ENCODE measurements at regions of chr10 and their contacts with region 1.

Region 1: GRCh38 chr10:71899665-71900412 is 48.8 kb upstream of the PSAP start:
- DNase-seq: no peak
- ATAC-seq: no peak

Region 2: DNA sequence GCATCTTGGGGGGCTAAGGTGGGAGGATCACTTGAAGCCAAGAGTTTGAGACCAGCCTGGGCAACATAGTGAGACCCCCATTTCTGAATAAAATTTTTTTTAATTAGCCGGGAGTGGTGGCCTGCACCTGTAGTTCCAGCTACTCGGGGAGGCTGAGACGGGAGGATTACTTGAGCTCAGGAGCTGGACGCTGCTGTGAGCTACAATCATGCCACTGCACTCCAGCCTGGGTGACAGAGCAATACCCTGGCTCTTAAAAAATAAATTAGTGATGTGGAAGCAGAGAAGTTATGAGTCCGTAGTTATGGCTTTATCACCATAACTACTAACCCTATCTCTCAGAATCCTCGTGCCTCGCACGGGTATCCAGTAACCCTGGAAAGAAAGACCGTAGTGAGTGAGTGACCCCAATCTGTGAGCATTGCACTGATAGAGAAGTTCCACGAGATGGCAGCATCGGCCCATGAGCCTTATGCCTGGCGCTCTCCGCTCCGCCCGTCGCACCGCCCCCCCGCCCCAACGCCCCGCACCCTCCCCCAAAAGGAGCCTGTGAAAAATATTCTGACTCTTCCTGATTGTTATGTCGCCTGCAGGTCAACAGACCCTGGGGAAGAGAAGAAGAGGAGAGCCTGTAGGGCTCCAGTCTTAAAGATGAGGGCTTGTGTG is 585.7 kb before region 1 on chr10:
- intact Hi-C with region 1: loop called (anchors 5 kb)
- DNase-seq: no peak
- ATAC-seq: peak; percentile 68

Region 3: DNA sequence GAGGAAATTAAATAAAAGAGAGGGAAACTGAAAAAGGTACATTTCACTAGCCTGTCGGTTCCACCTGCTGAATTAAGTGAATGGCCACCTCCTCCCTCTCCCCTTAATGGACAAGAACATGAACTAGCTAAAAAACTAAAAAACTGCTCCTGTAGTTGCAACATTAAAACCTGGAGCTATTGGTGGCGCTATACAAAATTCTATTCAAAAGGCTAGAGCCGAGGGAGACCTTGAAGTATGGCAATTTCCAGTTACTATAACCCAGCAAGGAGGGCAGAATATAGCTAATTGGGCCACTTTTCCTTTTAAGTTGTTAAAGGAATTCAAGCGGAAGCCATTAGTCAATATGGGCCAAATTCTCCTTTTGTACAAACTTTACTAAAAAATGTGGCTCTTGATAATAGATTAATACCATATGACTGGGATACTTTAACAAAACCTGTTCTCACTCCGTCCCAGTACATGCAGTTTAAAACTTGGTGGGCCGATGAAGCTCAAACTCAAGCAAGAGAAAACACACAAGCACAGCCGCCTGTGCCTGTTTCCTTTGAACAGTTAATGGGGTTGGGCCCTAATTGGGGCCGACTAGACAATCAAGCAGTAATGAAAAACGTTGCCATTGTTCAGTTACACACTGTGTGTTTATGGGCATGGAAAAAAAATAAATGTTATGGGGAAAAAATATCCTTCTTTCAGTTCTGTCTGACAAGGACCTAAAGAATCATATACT is 57.9 kb after region 1 on chr10:
- intact Hi-C with region 1: loop called (anchors 5 kb)
- DNase-seq: no peak
- ATAC-seq: no peak

Measured in Right ventricle myocardium inferior (tissue), 1 donor.